ENCODE measurements at regions of chr14 and their contacts with region 1.

Region 1: GRCh38 chr14:100375963-100376735 is 53.0 kb downstream of the SLC25A47 start:
- DNase-seq: peak; percentile 95
- ATAC-seq: peak; percentile 89
- H3K4me3 ChIP-seq: peak within 1 kb of the TSS; percentile 70 to 93 (median 84)
- H3K4me3 Mint-ChIP-seq: peak within 1 kb of the TSS; percentile 95
- H3K27ac ChIP-seq: peak within 1 kb of the TSS; percentile 62 to 93
- H3K27ac Mint-ChIP-seq: peak within 1 kb of the TSS; percentile 93
- H3K4me1 ChIP-seq: peaks cover 32 to 46% of the 10 kb centered on the region in 2 donors
- H3K4me1 Mint-ChIP-seq: peaks cover 40% of the 10 kb centered on the region
- H3K27me3 ChIP-seq: no peaks in the 10 kb centered on the region
- H3K27me3 Mint-ChIP-seq: no peaks in the 10 kb centered on the region
- CTCF ChIP-seq: no peak

Region 2: GRCh38 chr14:99982537-99983250 is 393.5 kb before region 1 on chr14:
- CTCF ChIA-PET with region 1: no interaction called
- POLR2A ChIA-PET with region 1: no interaction called
- intact Hi-C with region 1: loop called (anchors 2 kb)
- DNase-seq: peak; percentile 74
- ATAC-seq: peak; percentile 99
- H3K4me3 ChIP-seq: no peak overlapping the region
- H3K4me3 Mint-ChIP-seq: no peak overlapping the region
- H3K27ac ChIP-seq: no peak overlapping the region
- H3K27ac Mint-ChIP-seq: no peak overlapping the region
- H3K4me1 ChIP-seq: no peaks in the 10 kb centered on the region
- H3K4me1 Mint-ChIP-seq: no peaks in the 10 kb centered on the region
- H3K27me3 ChIP-seq: no peaks in the 10 kb centered on the region
- H3K27me3 Mint-ChIP-seq: no peaks in the 10 kb centered on the region
- CTCF ChIP-seq: peak; percentile 96

Region 3: DNA sequence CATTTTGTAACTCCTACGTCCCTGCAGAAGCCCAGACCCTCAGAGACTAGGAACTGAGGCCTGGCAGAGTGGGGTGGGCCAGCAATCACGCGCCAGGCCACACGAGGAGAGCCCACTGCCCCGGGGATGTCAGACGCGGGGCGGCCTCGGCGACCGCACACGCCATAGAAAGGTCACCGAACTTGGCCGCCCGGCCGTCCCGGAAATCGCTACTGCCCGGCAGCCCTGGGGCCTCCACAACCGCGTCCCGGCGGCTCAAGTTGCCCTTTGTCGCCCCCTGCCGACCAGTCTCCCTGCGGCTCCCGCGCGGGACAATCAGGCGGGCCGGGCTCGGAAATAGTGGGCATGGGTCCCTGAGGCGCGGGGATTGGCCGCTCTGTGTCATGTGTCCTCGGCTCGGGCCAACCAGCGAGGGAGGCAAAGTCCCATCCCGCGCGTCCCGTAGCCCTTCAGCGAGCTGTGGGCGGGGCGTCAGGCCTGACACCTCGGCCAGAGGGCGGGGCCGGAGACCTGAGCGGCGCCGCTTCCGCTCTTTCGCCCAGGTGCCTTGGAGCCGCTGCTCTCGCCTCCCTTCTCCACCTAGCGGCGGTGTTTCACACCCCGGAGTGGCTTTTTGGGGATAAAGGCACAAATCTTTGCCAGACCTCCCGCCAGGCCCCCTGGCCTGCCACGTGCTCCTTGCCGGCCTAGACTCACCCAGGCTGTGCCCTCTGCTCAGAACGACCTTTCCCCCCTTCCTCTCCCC is 183.3 kb before region 1 on chr14:
- CTCF ChIA-PET with region 1: interaction called, 6 read pairs
- POLR2A ChIA-PET with region 1: no interaction called
- intact Hi-C with region 1: loop called (anchors 1 kb)
- DNase-seq: peak; percentile 100
- ATAC-seq: peak; percentile 98
- H3K4me3 ChIP-seq: peak overlapping the region; percentile 3 to 63 (median 52)
- H3K4me3 Mint-ChIP-seq: peak overlapping the region; percentile 76
- H3K27ac ChIP-seq: peak overlapping the region; percentile 88
- H3K27ac Mint-ChIP-seq: peak overlapping the region; percentile 96
- H3K4me1 ChIP-seq: peaks cover 10 to 14% of the 10 kb centered on the region in 2 donors
- H3K4me1 Mint-ChIP-seq: peaks cover 9% of the 10 kb centered on the region
- H3K27me3 ChIP-seq: no peaks in the 10 kb centered on the region
- H3K27me3 Mint-ChIP-seq: no peaks in the 10 kb centered on the region
- CTCF ChIP-seq: peak; percentile 94

Region 4: DNA sequence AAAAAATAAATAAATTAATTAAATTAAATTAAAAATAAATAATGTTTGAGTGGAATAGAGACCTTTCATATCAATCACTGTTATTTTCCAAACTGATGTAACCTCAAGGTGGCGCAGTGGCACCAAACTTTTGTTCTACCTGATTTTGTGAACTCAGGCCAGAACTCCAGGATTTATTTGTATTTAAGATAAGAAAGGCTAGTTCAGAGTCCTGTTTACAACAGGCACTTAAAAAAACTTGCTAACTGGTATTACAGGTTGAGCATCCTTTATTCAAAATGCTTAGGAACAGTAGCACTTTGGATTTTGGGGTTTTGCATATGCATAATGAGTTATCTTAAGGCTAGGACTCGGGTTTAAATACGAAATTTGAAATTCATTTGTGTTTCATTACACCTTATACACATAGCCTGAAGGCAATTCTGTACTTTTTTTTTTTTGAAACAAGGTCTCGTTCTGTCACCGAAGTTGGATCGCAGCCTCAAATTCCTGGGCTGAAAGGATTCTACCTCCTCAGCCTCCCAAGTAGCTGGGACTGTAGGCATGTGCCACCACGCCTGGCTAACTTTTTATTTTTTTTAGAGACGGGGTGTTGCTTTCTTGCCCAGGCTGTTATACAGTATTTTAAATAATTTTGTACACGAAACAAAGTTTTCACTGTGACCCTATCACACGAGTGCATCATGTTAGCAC is 104.8 kb before region 1 on chr14:
- CTCF ChIA-PET with region 1: interaction called, 17 read pairs
- POLR2A ChIA-PET with region 1: no interaction called
- intact Hi-C with region 1: loop called (anchors 1 kb)
- DNase-seq: peak; percentile 48
- ATAC-seq: no peak
- H3K4me3 ChIP-seq: no peak overlapping the region
- H3K4me3 Mint-ChIP-seq: no peak overlapping the region
- H3K27ac ChIP-seq: no peak overlapping the region
- H3K27ac Mint-ChIP-seq: no peak overlapping the region
- H3K4me1 ChIP-seq: no peaks in the 10 kb centered on the region
- H3K4me1 Mint-ChIP-seq: peaks cover 33% of the 10 kb centered on the region
- H3K27me3 ChIP-seq: no peaks in the 10 kb centered on the region
- H3K27me3 Mint-ChIP-seq: no peaks in the 10 kb centered on the region
- CTCF ChIP-seq: peak; percentile 62

Region 5: GRCh38 chr14:100297302-100298300 is 78.5 kb before region 1 on chr14:
- CTCF ChIA-PET with region 1: interaction called, 14 read pairs
- POLR2A ChIA-PET with region 1: interaction called, 3 read pairs
- intact Hi-C with region 1: no loop called
- DNase-seq: peak; percentile 79
- ATAC-seq: peak; percentile 86
- H3K4me3 ChIP-seq: peak overlapping the region in 3 of 5 experiments; percentile 16 to 32 (median 28)
- H3K4me3 Mint-ChIP-seq: peak overlapping the region; percentile 82
- H3K27ac ChIP-seq: peak overlapping the region; percentile 21 to 48
- H3K27ac Mint-ChIP-seq: peak overlapping the region; percentile 97
- H3K4me1 ChIP-seq: peaks cover 35 to 57% of the 10 kb centered on the region in 2 donors
- H3K4me1 Mint-ChIP-seq: peaks cover 60% of the 10 kb centered on the region
- H3K27me3 ChIP-seq: no peaks in the 10 kb centered on the region
- H3K27me3 Mint-ChIP-seq: no peaks in the 10 kb centered on the region
- CTCF ChIP-seq: no peak

Region 6: DNA sequence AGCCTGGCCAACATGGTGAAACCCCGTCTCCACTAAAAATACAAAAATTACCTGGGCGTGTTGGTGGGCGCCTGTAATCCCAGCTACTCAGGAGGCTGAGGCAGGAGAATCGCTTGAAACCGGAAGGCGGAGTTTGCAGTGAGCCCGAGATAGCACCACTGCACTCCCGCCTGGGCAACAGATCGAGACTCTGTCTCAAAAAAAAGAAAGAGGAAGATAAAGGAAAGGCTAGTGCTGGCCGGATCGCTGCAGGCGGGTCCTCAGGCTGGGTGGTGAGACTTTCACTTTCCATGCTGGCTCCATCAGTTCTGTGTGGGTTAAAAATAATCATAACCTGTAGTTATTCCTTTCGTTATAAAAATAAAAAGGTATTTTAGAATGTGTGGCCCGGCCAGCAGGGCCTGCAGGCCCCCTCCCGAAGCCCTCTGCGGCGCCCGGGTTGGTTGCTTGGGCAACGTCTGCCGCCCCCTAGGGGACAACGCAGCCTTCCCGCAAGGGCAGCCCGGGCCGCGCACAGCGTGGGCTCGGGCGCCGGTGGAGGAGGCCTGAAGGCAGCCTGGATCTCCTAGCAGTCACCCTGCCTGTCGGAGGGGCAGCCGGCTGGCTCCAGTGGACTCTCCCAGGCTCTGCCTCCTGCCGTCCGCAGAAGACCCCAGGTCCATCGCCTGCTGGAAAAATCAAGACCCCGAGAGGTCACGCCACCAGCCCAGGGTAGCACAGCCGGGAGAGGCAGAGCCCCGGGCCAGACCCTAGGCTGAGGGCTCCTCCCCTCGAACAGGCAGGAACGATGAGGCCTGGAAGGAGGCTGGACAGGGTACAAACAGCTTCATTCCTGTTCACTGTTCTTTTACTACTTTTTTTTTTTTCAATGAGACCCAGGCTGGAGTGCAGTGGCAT is 58.0 kb before region 1 on chr14:
- CTCF ChIA-PET with region 1: interaction called, 3 read pairs
- POLR2A ChIA-PET with region 1: no interaction called
- intact Hi-C with region 1: loop called (anchors 1 kb)
- DNase-seq: peak; percentile 82
- ATAC-seq: peak; percentile 97
- H3K4me3 ChIP-seq: peak overlapping the region; percentile 48 to 70 (median 56)
- H3K4me3 Mint-ChIP-seq: peak overlapping the region; percentile 78
- H3K27ac ChIP-seq: peak overlapping the region; percentile 44 to 56
- H3K27ac Mint-ChIP-seq: peak overlapping the region; percentile 89
- H3K4me1 ChIP-seq: peaks cover 6 to 12% of the 10 kb centered on the region in 2 donors
- H3K4me1 Mint-ChIP-seq: peaks cover 5% of the 10 kb centered on the region
- H3K27me3 ChIP-seq: no peaks in the 10 kb centered on the region
- H3K27me3 Mint-ChIP-seq: no peaks in the 10 kb centered on the region
- CTCF ChIP-seq: peak; percentile 95

Region 7: DNA sequence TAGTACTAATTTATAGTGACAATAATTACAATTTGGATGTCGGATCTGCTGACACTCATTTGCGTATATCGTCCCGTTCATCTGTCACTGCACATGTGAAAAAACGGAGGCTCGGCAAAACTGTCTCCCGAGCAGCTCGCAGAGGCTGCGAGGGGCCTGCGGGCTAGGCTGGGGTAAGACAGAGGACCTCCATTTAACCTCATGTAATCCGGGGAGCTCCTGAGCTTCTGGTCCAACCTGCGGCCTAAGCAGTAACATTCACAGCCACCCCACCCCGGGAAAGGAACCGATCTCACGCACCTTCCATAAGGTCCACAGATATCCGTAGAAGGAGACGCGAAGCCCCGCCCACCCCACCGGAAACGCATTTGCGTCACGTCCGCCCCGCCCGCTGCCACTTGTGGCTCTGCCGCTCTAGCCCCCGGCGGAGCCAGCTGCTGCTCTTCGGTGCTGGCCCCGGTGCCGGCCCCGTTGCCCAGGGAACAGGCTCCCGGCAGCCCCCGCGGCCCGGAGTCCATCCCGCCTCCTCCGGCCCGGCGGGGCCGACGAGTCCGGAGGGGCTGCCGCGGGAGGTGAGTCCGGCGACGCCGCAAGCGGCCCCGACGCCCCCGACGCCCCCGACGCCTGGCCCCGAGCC is 1986.5 kb after region 1 on chr14 and contains the starts of genes CINP and TECPR2:
- CTCF ChIA-PET with region 1: no interaction called
- POLR2A ChIA-PET with region 1: no interaction called
- intact Hi-C with region 1: loop called (anchors 5 kb)
- DNase-seq: peak; percentile 95
- ATAC-seq: peak; percentile 97
- H3K4me3 ChIP-seq: peak within 1 kb of the TSS; percentile 55 to 90 (median 82)
- H3K4me3 Mint-ChIP-seq: no peak within 1 kb of the TSS
- H3K27ac ChIP-seq: peak within 1 kb of the TSS; percentile 61 to 93
- H3K27ac Mint-ChIP-seq: peak within 1 kb of the TSS; percentile 92
- H3K4me1 ChIP-seq: peaks cover 16 to 18% of the 10 kb centered on the region in 2 donors
- H3K4me1 Mint-ChIP-seq: peaks cover 25% of the 10 kb centered on the region
- H3K27me3 ChIP-seq: no peaks in the 10 kb centered on the region
- H3K27me3 Mint-ChIP-seq: no peaks in the 10 kb centered on the region
- CTCF ChIP-seq: no peak
- total RNA-seq, gene CINP: 23.7 and 28.8 TPM in 2 replicates
- total RNA-seq, gene TECPR2: 10.8 and 11.2 TPM in 2 replicates